CD4-positive, alpha-beta memory T cell (primary cell): ENCODE measurements at regions of chr2 and their contacts with region 1.

Region 1: GRCh38 chr2:28423856-28424605 is 31.4 kb downstream of the FOSL2 start:
- DNase-seq: peak; percentile 33 to 55 (median 45)
- H3K4me3 ChIP-seq: peak overlapping the region in 1 of 2 donors; percentile 18
- H3K4me3 Mint-ChIP-seq: peak overlapping the region; percentile 54 to 81 (median 72)
- H3K27ac ChIP-seq: peak overlapping the region; percentile 8
- H3K27ac Mint-ChIP-seq: peak overlapping the region; percentile 81 to 98 (median 95)
- H3K4me1 ChIP-seq: peaks cover 30% of the 10 kb centered on the region
- H3K4me1 Mint-ChIP-seq: peaks cover 17 to 46% (median 31%) of the 10 kb centered on the region in 4 donors
- H3K27me3 ChIP-seq: no peaks in the 10 kb centered on the region
- H3K27me3 Mint-ChIP-seq: no peaks in the 10 kb centered on the region

Region 2: GRCh38 chr2:28300485-28301341 is 123.3 kb before region 1 on chr2:
- CTCF ChIA-PET with region 1: no interaction called
- POLR2A ChIA-PET with region 1: no interaction called
- intact Hi-C with region 1: no loop called
- DNase-seq: no peak
- H3K4me3 ChIP-seq: no peak overlapping the region
- H3K4me3 Mint-ChIP-seq: no peak overlapping the region
- H3K27ac ChIP-seq: no peak overlapping the region
- H3K27ac Mint-ChIP-seq: peak overlapping the region in 1 of 7 donors; percentile 33
- H3K4me1 ChIP-seq: no peaks in the 10 kb centered on the region
- H3K4me1 Mint-ChIP-seq: peaks cover 0 to 2% (median 0%) of the 10 kb centered on the region in 4 donors
- H3K27me3 ChIP-seq: no peaks in the 10 kb centered on the region
- H3K27me3 Mint-ChIP-seq: no peaks in the 10 kb centered on the region

Region 3: DNA sequence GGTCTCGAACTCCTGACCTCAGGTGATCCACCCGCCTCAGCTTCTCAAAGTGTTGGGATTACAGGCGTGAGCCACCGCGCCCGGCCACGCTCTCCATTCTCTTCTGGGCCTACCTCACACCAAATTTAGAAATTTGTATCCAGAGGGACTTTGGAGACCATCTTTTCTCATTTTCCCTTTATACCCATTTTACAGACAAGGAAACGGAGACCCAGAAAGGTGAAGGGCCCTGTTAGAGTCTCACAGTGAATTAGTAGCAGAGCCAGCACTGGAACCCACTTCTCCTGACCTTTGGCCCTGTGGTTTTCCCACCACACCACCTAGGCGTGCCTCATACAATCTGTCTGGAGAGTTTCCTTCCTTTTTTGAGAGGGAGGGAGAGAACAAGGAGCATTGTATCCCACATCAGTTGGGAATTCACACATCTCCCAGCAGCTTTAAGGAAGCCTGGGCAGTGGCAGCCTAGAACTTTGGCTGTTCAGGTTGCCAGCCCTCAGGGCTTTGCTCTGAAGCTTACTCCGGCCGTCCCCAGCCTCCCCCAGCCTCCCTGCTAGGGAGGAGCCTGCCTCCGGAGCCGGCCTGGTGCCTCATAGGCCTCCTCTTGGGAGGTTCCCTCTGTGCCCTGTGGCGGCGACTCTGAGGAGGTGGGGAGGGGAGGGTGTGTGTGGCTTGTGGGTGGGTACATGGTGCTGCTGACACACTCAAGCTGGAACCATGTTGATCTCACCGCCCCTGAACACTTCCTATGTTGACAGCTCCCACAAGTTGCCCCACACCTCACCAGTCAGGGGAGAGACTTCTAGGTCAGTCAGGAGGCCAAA is 17.5 kb before region 1 on chr2:
- CTCF ChIA-PET with region 1: interaction called, 4 read pairs
- POLR2A ChIA-PET with region 1: interaction called, 14 read pairs
- intact Hi-C with region 1: loop called (anchors 2 kb)
- DNase-seq: peak; percentile 70 to 90 (median 75)
- H3K4me3 ChIP-seq: no peak overlapping the region
- H3K4me3 Mint-ChIP-seq: peak overlapping the region; percentile 2 to 73 (median 54)
- H3K27ac ChIP-seq: peak overlapping the region; percentile 34
- H3K27ac Mint-ChIP-seq: peak overlapping the region; percentile 87 to 100 (median 96)
- H3K4me1 ChIP-seq: peaks cover 78% of the 10 kb centered on the region
- H3K4me1 Mint-ChIP-seq: peaks cover 53 to 91% (median 76%) of the 10 kb centered on the region in 4 donors
- H3K27me3 ChIP-seq: no peaks in the 10 kb centered on the region
- H3K27me3 Mint-ChIP-seq: no peaks in the 10 kb centered on the region